Keratinocyte (primary cell): ENCODE measurements at regions of chr16 and their contacts with region 1.

Region 1: GRCh38 chr16:18979936-18980335 is 3.8 kb upstream of the TMC7 start:
- DNase-seq: no peak
- H3K4me3 ChIP-seq: no peak overlapping the region
- H3K27ac ChIP-seq: no peak overlapping the region
- H3K4me1 ChIP-seq: peaks cover 12% of the 10 kb centered on the region
- H3K27me3 ChIP-seq: no peaks in the 10 kb centered on the region
- CTCF ChIP-seq: no peak

Region 2: DNA sequence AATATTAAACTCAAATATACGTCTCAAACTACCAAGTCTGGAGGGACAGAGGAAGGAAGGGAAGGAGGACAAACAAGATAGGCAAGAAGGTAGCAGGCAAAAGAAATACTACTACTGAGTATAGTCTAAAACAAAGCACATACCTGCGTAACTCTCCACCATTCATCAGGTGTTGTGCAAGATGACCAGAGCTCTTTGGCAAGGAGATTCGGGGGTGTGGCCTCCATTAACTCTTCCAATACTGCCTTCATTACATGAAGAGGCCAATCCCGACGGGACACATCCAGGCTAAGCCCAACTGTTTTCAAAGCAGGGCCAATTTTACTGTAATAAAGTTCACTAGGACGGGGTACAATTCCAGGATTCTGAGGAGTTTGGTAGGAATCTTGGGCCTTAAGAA is 140.4 kb before region 1 on chr16:
- dilution Hi-C with region 1: loop called (anchors 10 kb)
- DNase-seq: no peak
- H3K4me3 ChIP-seq: no peak overlapping the region
- H3K27ac ChIP-seq: no peak overlapping the region
- H3K4me1 ChIP-seq: no peaks in the 10 kb centered on the region
- H3K27me3 ChIP-seq: no peaks in the 10 kb centered on the region
- CTCF ChIP-seq: no peak